ENCODE measurements at regions of chr13 and their contacts with region 1.

Region 1: GRCh38 chr13:36261976-36262375 is 35.6 kb downstream of the CCDC169 start:
- DNase-seq: no peak
- ATAC-seq: no peak
- H3K4me3 ChIP-seq: no peak overlapping the region
- H3K27ac ChIP-seq: no peak overlapping the region
- H3K4me1 ChIP-seq: no peaks in the 10 kb centered on the region
- H3K27me3 ChIP-seq: no peaks in the 10 kb centered on the region
- CTCF ChIP-seq: no peak
- EP300 ChIP-seq: no peak
- POLR2A ChIP-seq: no peak
- RAD21 ChIP-seq: no peak

Region 2: GRCh38 chr13:36251526-36251925 is 10.4 kb before region 1 on chr13:
- CTCF ChIA-PET with region 1: interaction called, 5 read pairs
- POLR2A ChIA-PET with region 1: no interaction called
- RAD21 ChIA-PET with region 1: no interaction called
- SMC1A ChIA-PET with region 1: interaction called, 24 read pairs
- in situ Hi-C with region 1: no loop called
- intact Hi-C with region 1: no loop called
- DNase-seq: no peak
- ATAC-seq: peak; percentile 84
- H3K4me3 ChIP-seq: no peak overlapping the region
- H3K27ac ChIP-seq: no peak overlapping the region
- H3K4me1 ChIP-seq: no peaks in the 10 kb centered on the region
- H3K27me3 ChIP-seq: no peaks in the 10 kb centered on the region
- CTCF ChIP-seq: no peak
- EP300 ChIP-seq: no peak
- POLR2A ChIP-seq: no peak
- RAD21 ChIP-seq: no peak

Region 3: GRCh38 chr13:36297366-36298338 is 35.7 kb after region 1 on chr13 and contains the start of gene CCDC169:
- CTCF ChIA-PET with region 1: no interaction called
- POLR2A ChIA-PET with region 1: no interaction called
- RAD21 ChIA-PET with region 1: no interaction called
- SMC1A ChIA-PET with region 1: no interaction called
- in situ Hi-C with region 1: no loop called
- intact Hi-C with region 1: no loop called
- DNase-seq: no peak
- ATAC-seq: peak; percentile 79
- H3K4me3 ChIP-seq: peak within 1 kb of the TSS; percentile 56
- H3K27ac ChIP-seq: no peak within 1 kb of the TSS
- H3K4me1 ChIP-seq: no peaks in the 10 kb centered on the region
- H3K27me3 ChIP-seq: peaks cover 0 to 8% of the 10 kb centered on the region in 2 experiments; a peak in 2 of 4 replicates
- CTCF ChIP-seq: no peak
- EP300 ChIP-seq: no peak
- POLR2A ChIP-seq: no peak
- RAD21 ChIP-seq: no peak
- polyA plus RNA-seq, gene CCDC169: 0.13 to 0.37 TPM

Region 4: DNA sequence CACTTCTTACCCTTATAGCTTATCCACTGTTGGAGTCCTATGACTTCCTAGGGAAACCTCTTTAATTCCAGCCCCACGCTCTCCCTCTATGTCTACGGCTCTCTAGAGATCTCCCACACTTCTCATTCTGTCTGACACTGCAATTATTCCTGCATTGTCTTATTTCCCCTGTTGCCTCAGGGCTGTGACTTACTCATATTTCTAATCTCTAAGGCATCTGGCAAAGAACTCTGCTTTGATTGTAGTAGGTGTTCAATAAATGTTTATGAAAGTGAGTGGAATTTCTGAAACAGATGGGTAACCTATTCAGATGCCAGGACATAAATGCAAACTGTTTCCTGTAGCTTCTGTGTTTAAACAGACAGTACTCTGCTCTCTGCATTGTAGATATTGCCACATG is 309.5 kb after region 1 on chr13:
- CTCF ChIA-PET with region 1: no interaction called
- POLR2A ChIA-PET with region 1: no interaction called
- RAD21 ChIA-PET with region 1: no interaction called
- SMC1A ChIA-PET with region 1: no interaction called
- in situ Hi-C with region 1: no loop called
- intact Hi-C with region 1: no loop called
- DNase-seq: no peak
- ATAC-seq: no peak
- H3K4me3 ChIP-seq: no peak overlapping the region
- H3K27ac ChIP-seq: no peak overlapping the region
- H3K4me1 ChIP-seq: no peaks in the 10 kb centered on the region
- H3K27me3 ChIP-seq: no peaks in the 10 kb centered on the region
- CTCF ChIP-seq: no peak
- EP300 ChIP-seq: no peak
- POLR2A ChIP-seq: no peak
- RAD21 ChIP-seq: no peak